Left ventricle myocardium inferior (tissue), 1 donor: ENCODE measurements at regions of chr3 and their contacts with region 1.

Region 1: GRCh38 chr3:155701882-155702465 is 42.9 kb downstream of the PLCH1 start:
- DNase-seq: no peak
- H3K4me3 ChIP-seq: no peak overlapping the region
- H3K27ac ChIP-seq: peak overlapping the region; percentile 49
- H3K4me1 ChIP-seq: no peaks in the 10 kb centered on the region
- H3K27me3 ChIP-seq: no peaks in the 10 kb centered on the region
- CTCF ChIP-seq: peak; percentile 80

Region 2: GRCh38 chr3:155352900-155353490 is 349.0 kb before region 1 on chr3:
- intact Hi-C with region 1: loop called (anchors 2 kb)
- DNase-seq: no peak
- H3K4me3 ChIP-seq: no peak overlapping the region
- H3K27ac ChIP-seq: no peak overlapping the region
- H3K4me1 ChIP-seq: no peaks in the 10 kb centered on the region
- H3K27me3 ChIP-seq: no peaks in the 10 kb centered on the region
- CTCF ChIP-seq: peak; percentile 67

Region 3: GRCh38 chr3:155382396-155383042 is 319.5 kb before region 1 on chr3:
- intact Hi-C with region 1: loop called (anchors 10 kb)
- DNase-seq: peak; percentile 77
- H3K4me3 ChIP-seq: no peak overlapping the region
- H3K27ac ChIP-seq: no peak overlapping the region
- H3K4me1 ChIP-seq: peaks cover 12% of the 10 kb centered on the region
- H3K27me3 ChIP-seq: no peaks in the 10 kb centered on the region
- CTCF ChIP-seq: peak; percentile 70

Region 4: DNA sequence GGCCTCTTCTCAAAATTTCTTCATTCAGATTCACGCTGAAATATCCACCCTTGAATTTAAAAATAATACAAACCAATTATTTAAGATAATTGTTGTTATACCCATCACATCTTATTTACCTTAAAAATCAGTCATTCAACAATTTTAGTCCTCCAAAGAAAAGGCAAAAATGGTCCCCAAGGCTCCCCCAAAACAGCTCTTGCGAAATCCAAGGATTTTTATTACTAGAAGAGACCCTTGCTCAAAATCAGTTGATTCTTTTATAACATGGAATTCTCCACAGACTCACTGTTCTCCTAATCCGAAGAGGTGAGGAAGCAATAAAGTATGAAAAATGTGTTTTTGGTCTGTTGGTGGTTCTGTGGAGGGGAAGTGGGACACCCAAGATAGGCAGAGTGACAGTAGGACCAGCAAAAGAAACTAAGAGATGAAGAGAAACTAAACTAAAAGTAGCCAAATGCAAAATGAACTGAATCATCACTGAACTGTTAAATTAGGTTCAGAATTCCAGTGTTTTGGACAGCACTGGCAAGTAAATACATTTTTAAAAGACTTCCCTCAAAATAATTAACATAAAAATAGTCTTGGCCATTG is 62.0 kb after region 1 on chr3:
- intact Hi-C with region 1: no loop called
- DNase-seq: no peak
- H3K4me3 ChIP-seq: no peak overlapping the region
- H3K27ac ChIP-seq: no peak overlapping the region
- H3K4me1 ChIP-seq: peaks cover 14% of the 10 kb centered on the region
- H3K27me3 ChIP-seq: no peaks in the 10 kb centered on the region
- CTCF ChIP-seq: no peak